IMR-90 (cell line): ENCODE measurements at regions of chr2 and their contacts with region 1.

Region 1: DNA sequence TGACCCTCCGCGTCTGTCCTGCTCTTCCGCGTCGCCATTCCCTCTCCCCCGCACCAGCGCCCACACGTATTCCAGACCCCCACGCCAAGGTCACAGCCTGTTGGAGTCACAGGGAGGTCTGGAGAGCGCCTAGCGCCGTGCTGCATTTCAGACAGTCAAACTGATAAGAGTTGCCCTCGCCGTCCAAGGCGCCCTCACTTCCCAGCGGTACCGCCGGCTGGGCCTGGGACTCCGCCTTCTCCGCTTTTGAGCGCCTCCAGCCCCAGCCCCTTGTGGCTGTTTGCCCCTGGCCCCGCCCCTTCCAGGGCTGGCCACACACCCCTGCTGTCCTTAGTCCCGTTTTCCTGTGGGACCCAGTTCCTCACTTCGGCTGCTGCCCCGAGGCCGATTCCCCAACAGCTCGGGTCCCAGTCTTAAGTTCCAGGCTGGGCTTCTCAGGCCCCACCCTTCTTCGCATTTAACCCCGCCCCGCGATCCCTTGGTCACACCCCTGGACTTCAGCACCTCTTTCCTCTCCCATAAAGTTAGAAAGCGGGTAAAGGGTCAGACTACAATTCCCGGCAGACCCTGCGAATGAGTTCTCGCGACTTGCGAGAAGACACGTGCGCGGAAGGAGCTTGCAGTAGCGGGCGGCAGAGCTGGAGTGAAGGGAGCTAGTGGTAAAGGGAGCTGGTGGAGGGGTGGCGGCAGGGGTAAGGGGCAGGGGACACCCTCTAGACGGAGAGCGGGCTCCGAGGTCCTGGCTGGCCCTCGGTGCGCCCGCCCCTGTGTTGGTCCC is at the start of gene GMPPA:
- DNase-seq: peak; percentile 99
- ATAC-seq: peak; percentile 85
- H3K4me3 ChIP-seq: peak within 1 kb of the TSS; percentile 62
- H3K27ac ChIP-seq: peak within 1 kb of the TSS; percentile 89
- H3K4me1 ChIP-seq: peaks cover 15% of the 10 kb centered on the region
- H3K27me3 ChIP-seq: no peaks in the 10 kb centered on the region; the same call in 1 of the 2 replicates
- CTCF ChIP-seq: no peak
- POLR2A ChIP-seq: peak; percentile 86
- RAD21 ChIP-seq: no peak
- total RNA-seq, gene GMPPA: 93.0 and 103 TPM in 2 replicates

Region 2: GRCh38 chr2:219278655-219279516 is 219.6 kb before region 1 on chr2 and contains the start of gene DNAJB2:
- CTCF ChIA-PET with region 1: no interaction called
- POLR2A ChIA-PET with region 1: no interaction called
- dilution Hi-C with region 1: no loop called
- in situ Hi-C with region 1: no loop called
- intact Hi-C with region 1: no loop called
- DNase-seq: peak; percentile 99
- ATAC-seq: peak; percentile 91
- H3K4me3 ChIP-seq: peak within 1 kb of the TSS; percentile 65
- H3K27ac ChIP-seq: peak within 1 kb of the TSS; percentile 82
- H3K4me1 ChIP-seq: peaks cover 18% of the 10 kb centered on the region
- H3K27me3 ChIP-seq: no peaks in the 10 kb centered on the region
- CTCF ChIP-seq: no peak
- POLR2A ChIP-seq: peak; percentile 89
- RAD21 ChIP-seq: peak; percentile 32; the same call in 1 of the 2 replicates
- total RNA-seq, gene DNAJB2: 30.6 and 43.0 TPM in 2 replicates

Region 3: GRCh38 chr2:219459460-219460311 is 38.8 kb before region 1 on chr2:
- CTCF ChIA-PET with region 1: interaction called, 4 read pairs
- POLR2A ChIA-PET with region 1: no interaction called
- dilution Hi-C with region 1: no loop called
- in situ Hi-C with region 1: no loop called
- intact Hi-C with region 1: loop called (anchors 2 kb)
- DNase-seq: peak; percentile 63
- ATAC-seq: peak; percentile 72
- H3K4me3 ChIP-seq: no peak overlapping the region
- H3K27ac ChIP-seq: peak overlapping the region; percentile 90
- H3K4me1 ChIP-seq: peaks cover 24% of the 10 kb centered on the region
- H3K27me3 ChIP-seq: no peaks in the 10 kb centered on the region
- CTCF ChIP-seq: peak; percentile 78
- POLR2A ChIP-seq: no peak
- RAD21 ChIP-seq: peak; percentile 72

Region 4: DNA sequence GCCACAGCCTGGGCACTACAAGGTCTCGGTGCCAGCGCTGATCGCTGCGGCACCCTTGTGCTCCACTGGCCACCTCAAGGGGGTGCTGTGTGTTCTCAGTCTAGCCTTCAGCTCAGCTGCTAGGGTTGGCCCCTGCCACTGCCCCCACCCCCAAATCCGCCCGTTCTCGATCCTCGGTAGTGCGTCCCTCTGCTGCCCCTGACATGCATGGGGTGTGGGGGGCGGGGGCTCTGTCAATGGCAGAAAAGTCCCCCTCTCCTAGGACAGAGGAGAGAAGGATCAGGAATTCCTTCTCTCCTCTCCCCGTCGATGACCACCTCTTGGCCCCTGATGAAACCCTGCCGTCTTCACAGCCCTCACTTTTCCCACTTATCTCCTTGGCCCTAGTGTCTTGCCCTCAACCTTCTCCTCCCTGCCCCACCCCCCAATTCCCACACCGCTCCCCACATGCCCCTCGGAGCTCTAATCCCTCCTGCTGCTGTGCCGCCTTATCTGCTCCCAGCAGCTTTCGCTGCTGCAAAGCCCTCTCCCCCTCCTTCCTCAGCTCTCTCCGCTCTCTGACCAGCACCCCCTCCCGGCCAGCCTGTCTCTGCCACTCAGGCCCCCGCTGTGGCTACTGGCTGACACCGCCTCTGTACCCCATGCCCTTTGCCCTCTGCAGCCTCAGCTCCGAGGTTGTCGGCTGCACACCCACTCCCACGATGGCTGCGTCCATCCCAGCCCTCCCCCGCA is 11.5 kb after region 1 on chr2:
- CTCF ChIA-PET with region 1: interaction called, 28 read pairs
- POLR2A ChIA-PET with region 1: interaction called, 4 read pairs
- dilution Hi-C with region 1: no loop called
- in situ Hi-C with region 1: no loop called
- intact Hi-C with region 1: no loop called
- DNase-seq: peak; percentile 45
- ATAC-seq: peak; percentile 85
- H3K4me3 ChIP-seq: peak overlapping the region; percentile 26
- H3K27ac ChIP-seq: no peak overlapping the region
- H3K4me1 ChIP-seq: peaks cover 8% of the 10 kb centered on the region; the same call in 1 of the 2 replicates
- H3K27me3 ChIP-seq: peaks cover 46% of the 10 kb centered on the region
- CTCF ChIP-seq: peak; percentile 67
- POLR2A ChIP-seq: no peak
- RAD21 ChIP-seq: peak; percentile 42

Region 5: GRCh38 chr2:219521066-219521880 is 22.8 kb after region 1 on chr2:
- CTCF ChIA-PET with region 1: interaction called, 17 read pairs
- POLR2A ChIA-PET with region 1: interaction called, 3 read pairs
- dilution Hi-C with region 1: no loop called
- in situ Hi-C with region 1: no loop called
- intact Hi-C with region 1: loop called (anchors 1 kb)
- DNase-seq: peak; percentile 37
- ATAC-seq: peak; percentile 78
- H3K4me3 ChIP-seq: no peak overlapping the region
- H3K27ac ChIP-seq: peak overlapping the region; percentile 26
- H3K4me1 ChIP-seq: peaks cover 16% of the 10 kb centered on the region
- H3K27me3 ChIP-seq: peaks cover 33% of the 10 kb centered on the region
- CTCF ChIP-seq: peak; percentile 70
- POLR2A ChIP-seq: no peak
- RAD21 ChIP-seq: peak; percentile 58

Region 6: DNA sequence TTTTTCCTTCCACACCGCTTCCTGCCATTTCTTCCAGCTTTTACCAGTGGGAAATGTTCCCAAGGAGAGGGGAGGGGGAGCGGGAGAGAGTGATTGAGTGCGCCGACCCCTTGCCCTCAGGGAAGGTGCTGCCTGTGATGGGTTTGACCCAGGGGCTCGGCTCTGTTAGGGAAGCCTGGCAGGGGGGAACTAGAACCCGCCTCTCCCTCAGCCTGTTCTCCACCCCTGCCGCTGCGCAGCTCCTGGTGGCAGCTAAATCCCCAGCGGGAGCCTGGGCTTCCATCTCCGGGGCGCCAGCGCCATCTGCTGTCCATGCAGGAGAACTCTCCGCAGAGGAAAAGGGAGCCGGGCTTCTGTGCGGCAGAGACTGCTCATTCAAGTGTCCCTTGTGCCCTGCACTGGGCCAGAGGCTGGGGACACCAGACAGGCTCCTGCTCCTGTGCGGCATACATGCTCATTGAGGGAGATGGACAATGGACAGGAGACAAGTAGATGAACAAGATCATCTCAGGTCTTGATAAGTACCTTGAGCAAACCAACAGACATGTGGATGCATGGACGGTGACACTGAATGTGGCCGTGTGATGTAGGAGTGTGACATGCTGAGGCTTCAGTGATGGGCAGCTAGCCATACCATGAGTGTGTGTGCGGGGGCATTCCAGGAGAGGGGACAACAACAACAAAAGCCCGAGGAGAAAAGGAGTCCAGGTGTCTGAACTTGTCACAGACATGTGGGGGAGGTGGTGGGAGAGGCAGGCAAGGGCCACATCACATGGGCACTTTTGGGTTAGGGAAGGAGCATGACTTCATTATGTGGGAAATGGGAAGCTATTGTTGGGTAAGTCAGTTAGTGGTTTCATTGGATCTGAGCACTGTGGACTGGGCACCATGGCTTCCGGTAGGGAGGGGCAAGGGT is 31.8 kb after region 1 on chr2:
- CTCF ChIA-PET with region 1: interaction called, 10 read pairs
- POLR2A ChIA-PET with region 1: no interaction called
- dilution Hi-C with region 1: no loop called
- in situ Hi-C with region 1: no loop called
- intact Hi-C with region 1: loop called (anchors 1 kb)
- DNase-seq: peak; percentile 78
- ATAC-seq: peak; percentile 97
- H3K4me3 ChIP-seq: peak overlapping the region; percentile 22; the same call in 1 of the 2 replicates
- H3K27ac ChIP-seq: no peak overlapping the region
- H3K4me1 ChIP-seq: no peaks in the 10 kb centered on the region
- H3K27me3 ChIP-seq: peaks cover 58% of the 10 kb centered on the region
- CTCF ChIP-seq: peak; percentile 99
- POLR2A ChIP-seq: peak; percentile 62
- RAD21 ChIP-seq: peak; percentile 99